Right ventricle myocardium inferior (tissue), 1 donor: ENCODE measurements at regions of chr7 and their contacts with region 1.

Region 1: GRCh38 chr7:16420649-16421332 is 547 bp downstream of the CRPPA start:
- DNase-seq: peak; percentile 92
- ATAC-seq: peak; percentile 96

Region 2: GRCh38 chr7:16129431-16130116 is 291.2 kb before region 1 on chr7:
- intact Hi-C with region 1: loop called (anchors 5 kb)
- DNase-seq: no peak
- ATAC-seq: no peak